Activated naive CD4-positive, alpha-beta T cell treated with anti-CD3 and anti-CD28 coated beads, Interleukin-2, amount 10 ng/mL, durations not matched to agents 7 days and 5 days (primary cell): ENCODE measurements at regions of chr3 and their contacts with region 1.

Region 1: GRCh38 chr3:169149349-169149890 is 514.1 kb downstream of the MECOM start:
- DNase-seq: peak; percentile 83
- H3K4me3 Mint-ChIP-seq: no peak overlapping the region
- H3K27ac Mint-ChIP-seq: no peak overlapping the region
- H3K4me1 Mint-ChIP-seq: peaks cover 23% of the 10 kb centered on the region
- H3K27me3 Mint-ChIP-seq: peaks cover 64% of the 10 kb centered on the region

Region 2: DNA sequence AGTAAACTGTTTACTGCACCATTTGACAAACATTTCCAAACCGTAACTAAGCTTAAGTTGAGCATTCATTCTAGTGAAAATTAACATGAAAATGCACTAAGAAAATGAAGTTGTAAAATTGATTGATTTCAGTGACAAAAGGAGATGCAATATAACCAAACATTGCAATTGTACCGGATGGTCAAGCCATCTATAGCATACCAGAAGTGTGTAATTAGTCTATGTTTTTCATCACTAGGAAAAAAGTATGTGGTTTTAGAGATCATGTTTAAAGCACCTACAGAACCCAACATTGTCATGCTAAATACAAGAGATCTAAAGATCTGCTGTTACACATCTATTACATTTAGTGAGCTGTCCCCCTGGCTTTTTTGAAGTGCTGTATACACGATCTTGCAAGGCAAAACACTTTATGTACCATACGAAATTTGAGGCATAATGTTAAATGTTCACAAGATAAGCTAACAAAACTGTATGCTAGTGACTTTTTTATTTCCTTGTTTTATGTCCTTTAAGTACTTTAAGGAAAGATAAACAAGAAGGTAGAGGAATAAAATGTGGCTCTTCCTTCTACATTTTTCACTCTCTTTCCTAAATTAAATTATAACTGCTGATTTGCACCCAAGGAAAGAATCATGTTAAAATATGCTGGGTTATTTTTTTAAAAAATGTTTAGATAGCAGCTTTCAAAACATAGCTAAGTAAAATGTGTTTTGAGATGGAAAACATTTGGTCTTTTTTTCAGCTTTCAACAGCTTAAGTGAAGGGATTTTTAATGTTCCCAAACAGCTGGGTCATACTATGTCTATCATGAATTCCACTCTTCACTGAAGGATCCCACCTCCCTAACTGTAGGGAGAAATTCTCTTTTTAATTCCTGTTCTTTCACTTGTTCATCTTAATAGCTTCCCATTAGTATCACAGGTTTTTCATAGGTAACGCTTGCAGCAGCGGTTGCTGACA is 16.1 kb after region 1 on chr3:
- CTCF ChIA-PET with region 1: no interaction called
- DNase-seq: no peak
- H3K4me3 Mint-ChIP-seq: no peak overlapping the region
- H3K27ac Mint-ChIP-seq: no peak overlapping the region
- H3K4me1 Mint-ChIP-seq: no peaks in the 10 kb centered on the region
- H3K27me3 Mint-ChIP-seq: no peaks in the 10 kb centered on the region

Region 3: GRCh38 chr3:169744366-169745054 is 595.1 kb after region 1 on chr3:
- CTCF ChIA-PET with region 1: interaction called, 11 read pairs
- DNase-seq: no peak
- H3K4me3 Mint-ChIP-seq: no peak overlapping the region
- H3K27ac Mint-ChIP-seq: no peak overlapping the region
- H3K4me1 Mint-ChIP-seq: peaks cover 7% of the 10 kb centered on the region
- H3K27me3 Mint-ChIP-seq: peaks cover 17% of the 10 kb centered on the region